ENCODE measurements at regions of chr14 and their contacts with region 1.

Region 1: GRCh38 chr14:102928412-102929240 is 6.2 kb downstream of the AMN start:
- DNase-seq: peak; percentile 55 to 92 (median 78)
- ATAC-seq: peak; percentile 86
- H3K4me3 ChIP-seq: peak overlapping the region; percentile 54
- H3K4me3 Mint-ChIP-seq: peak overlapping the region; percentile 73
- H3K27ac ChIP-seq: no peak overlapping the region
- H3K27ac Mint-ChIP-seq: no peak overlapping the region
- H3K4me1 ChIP-seq: peaks cover 39% of the 10 kb centered on the region
- H3K4me1 Mint-ChIP-seq: peaks cover 16% of the 10 kb centered on the region
- H3K27me3 ChIP-seq: peaks cover 44% of the 10 kb centered on the region in 2 experiments
- H3K27me3 Mint-ChIP-seq: peaks cover 27% of the 10 kb centered on the region
- CTCF ChIP-seq: no peak

Region 2: GRCh38 chr14:103057365-103058096 is 128.9 kb after region 1 on chr14 and contains the start of gene CDC42BPB:
- CTCF ChIA-PET with region 1: no interaction called
- POLR2A ChIA-PET with region 1: no interaction called
- intact Hi-C with region 1: loop called in 1 of 2 experiments (anchors 1 kb)
- DNase-seq: peak; percentile 25 to 82 (median 52)
- ATAC-seq: peak; percentile 89
- H3K4me3 ChIP-seq: peak within 1 kb of the TSS; percentile 52
- H3K4me3 Mint-ChIP-seq: peak within 1 kb of the TSS; percentile 88
- H3K27ac ChIP-seq: no peak within 1 kb of the TSS
- H3K27ac Mint-ChIP-seq: no peak within 1 kb of the TSS
- H3K4me1 ChIP-seq: peaks cover 18% of the 10 kb centered on the region
- H3K4me1 Mint-ChIP-seq: peaks cover 11% of the 10 kb centered on the region
- H3K27me3 ChIP-seq: peaks cover 6 to 12% of the 10 kb centered on the region in 2 experiments
- H3K27me3 Mint-ChIP-seq: peaks cover 15% of the 10 kb centered on the region
- CTCF ChIP-seq: no peak
- total RNA-seq, gene CDC42BPB: 6.6 to 7.6 TPM

Measured in CD4-positive, alpha-beta T cell (primary cell).